ENCODE measurements at regions of chr21 and their contacts with region 1.

Region 1: DNA sequence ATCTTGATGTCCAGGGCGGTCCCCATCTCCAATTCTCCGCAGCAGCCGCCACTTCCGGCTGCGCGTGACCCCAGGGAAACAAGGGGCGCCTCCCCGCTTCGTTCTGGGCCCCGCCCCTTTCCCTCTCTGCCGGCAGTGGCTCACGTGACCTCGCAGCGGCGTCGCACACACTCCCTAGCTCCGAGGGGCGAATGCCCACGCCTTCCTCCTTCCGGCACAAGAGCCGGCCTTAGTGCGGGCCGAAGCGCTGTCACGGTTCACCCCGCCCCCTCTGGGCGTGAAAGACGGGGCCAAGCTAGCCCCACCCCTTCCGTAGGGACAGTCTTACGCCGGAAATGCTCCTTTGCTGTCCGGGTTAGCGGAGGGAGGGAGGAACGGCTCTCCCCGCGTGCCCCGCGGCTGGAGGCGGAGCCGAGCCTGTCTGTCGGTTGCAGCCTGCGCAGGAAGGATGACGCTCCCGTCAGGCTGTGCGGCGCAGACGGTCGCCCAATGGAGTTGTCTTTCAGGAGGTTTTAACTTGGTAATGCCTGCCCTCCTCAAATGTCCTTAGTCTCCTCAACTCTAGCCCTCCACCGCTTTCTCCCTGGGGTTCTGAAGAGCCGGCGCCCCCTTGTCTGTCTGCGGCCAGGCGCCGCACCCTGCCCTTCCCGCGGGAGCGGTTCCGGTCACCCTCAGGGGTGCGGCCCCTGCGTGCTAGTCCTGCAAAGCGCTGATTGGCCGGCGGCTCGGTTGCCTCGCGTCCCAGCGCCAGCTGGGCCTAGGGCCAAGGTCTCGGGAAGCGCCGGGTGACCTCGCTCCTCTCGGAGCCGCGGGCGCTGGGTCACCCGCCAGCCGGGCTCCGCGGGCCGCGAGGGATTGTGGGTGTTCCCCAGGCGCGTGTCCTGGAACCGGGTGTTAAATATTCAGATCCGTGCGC is at the start of gene VPS26C:
- DNase-seq: peak; percentile 94 to 99
- H3K4me3 ChIP-seq: peak within 1 kb of the TSS; percentile 81 to 93
- H3K27ac ChIP-seq: peak within 1 kb of the TSS; percentile 97 to 98
- H3K4me1 ChIP-seq: peaks cover 0 to 18% of the 10 kb centered on the region in 2 donors
- H3K27me3 ChIP-seq: no peaks in the 10 kb centered on the region
- CTCF ChIP-seq: no peak
- total RNA-seq, gene VPS26C: 137 TPM

Region 2: GRCh38 chr21:37072988-37073416 is 194.5 kb before region 1 on chr21 and contains the starts of genes PIGP and TTC3:
- intact Hi-C with region 1: loop called (anchors 5 kb)
- DNase-seq: peak; percentile 73 to 96
- H3K4me3 ChIP-seq: peak within 1 kb of the TSS; percentile 84 to 96
- H3K27ac ChIP-seq: peak within 1 kb of the TSS; percentile 95 to 100
- H3K4me1 ChIP-seq: peaks cover 0 to 15% of the 10 kb centered on the region in 2 donors
- H3K27me3 ChIP-seq: no peaks in the 10 kb centered on the region
- CTCF ChIP-seq: no peak
- total RNA-seq, gene PIGP: 0.64 TPM
- total RNA-seq, gene TTC3: 70.7 TPM

Region 3: DNA sequence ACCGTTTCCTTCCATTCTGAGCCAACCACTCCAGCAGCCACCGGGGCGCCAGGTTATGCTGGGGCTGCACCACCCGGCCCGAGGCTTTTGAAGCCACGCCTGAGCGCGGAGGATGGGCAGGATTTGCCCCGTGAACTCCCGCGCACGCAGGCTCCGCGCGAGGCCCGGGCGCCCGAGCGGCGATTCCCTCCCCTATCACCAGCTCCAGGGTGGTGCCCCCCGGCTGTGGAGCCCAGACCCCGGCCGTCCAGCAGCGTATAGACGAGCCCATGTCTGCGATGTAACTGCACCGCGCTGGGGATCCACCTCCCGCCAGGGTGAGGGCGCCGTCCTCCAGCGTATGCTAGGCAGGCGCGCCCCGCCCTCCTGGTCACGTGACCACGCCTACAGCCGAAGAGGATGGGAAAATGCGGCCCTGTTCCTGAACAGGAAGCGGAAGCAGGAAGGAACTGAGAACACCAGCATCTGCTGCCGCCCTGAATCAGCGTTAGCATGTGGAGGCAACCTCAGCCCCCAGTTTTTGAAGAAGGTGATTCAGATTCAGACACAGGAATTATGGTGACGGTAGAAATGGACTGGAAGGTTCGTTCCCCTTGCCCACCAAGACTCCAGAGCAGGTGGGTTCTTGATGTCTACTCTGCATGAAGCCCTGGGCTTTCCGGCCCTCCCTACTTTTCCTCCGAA is 46.4 kb before region 1 on chr21:
- intact Hi-C with region 1: loop called (anchors 1 kb)
- DNase-seq: peak; percentile 88 to 97
- H3K4me3 ChIP-seq: peak overlapping the region; percentile 54 to 68
- H3K27ac ChIP-seq: peak overlapping the region; percentile 55 to 72
- H3K4me1 ChIP-seq: peaks cover 0 to 6% of the 10 kb centered on the region in 2 donors
- H3K27me3 ChIP-seq: no peaks in the 10 kb centered on the region
- CTCF ChIP-seq: peak in 2 of 3 experiments; percentile 29 to 53

Region 4: GRCh38 chr21:37348664-37349063 is 81.1 kb after region 1 on chr21:
- intact Hi-C with region 1: no loop called
- DNase-seq: no peak
- H3K4me3 ChIP-seq: no peak overlapping the region
- H3K27ac ChIP-seq: no peak overlapping the region
- H3K4me1 ChIP-seq: no peaks in the 10 kb centered on the region
- H3K27me3 ChIP-seq: no peaks in the 10 kb centered on the region
- CTCF ChIP-seq: no peak

Region 5: DNA sequence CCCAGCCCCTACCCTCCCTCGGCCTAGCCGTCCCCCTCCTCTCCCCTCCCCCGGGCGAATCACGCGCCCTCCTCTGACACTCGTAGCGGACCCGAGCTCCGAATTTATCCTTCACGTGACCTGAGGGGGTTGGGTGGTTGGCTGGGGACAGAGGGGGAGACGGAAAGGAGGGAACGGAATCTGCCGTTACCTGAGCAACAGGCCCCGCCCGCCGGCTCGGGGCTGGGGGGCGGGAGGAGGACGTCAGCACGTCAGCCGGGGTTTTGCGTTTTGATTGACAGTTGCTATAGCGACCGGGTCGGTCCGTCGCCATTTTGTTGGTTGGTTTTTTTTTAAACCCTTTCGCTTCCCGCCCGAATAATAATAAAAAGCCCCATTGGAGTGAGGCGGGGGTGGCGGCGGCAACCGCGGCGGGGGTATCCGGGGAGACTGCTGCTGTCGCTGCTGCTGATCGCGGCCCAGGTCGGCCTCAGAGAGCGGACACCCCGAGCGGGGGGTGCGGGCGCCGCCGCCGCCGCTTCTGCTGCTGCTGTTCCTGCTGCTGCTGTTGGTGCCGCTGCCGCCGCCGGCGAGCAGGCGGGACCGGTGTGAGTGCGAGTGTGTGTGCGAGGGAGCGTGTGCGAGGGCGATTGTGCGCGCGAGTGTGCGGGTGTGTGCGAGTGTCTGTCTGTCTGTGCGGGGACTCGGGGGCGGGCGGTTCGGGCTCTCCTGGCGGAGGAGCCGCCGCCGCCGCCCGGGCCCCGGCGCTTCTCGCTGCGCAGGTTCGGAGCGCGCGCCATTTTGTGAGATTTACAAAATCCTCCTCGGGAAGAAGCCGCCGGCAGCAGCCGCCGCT is 99.2 kb after region 1 on chr21 and contains the start of gene DYRK1A:
- intact Hi-C with region 1: loop called (anchors 1 kb)
- DNase-seq: peak; percentile 97 to 99
- H3K4me3 ChIP-seq: peak within 1 kb of the TSS; percentile 89 to 97
- H3K27ac ChIP-seq: peak within 1 kb of the TSS; percentile 100
- H3K4me1 ChIP-seq: peaks cover 4 to 19% of the 10 kb centered on the region in 2 donors
- H3K27me3 ChIP-seq: no peaks in the 10 kb centered on the region
- CTCF ChIP-seq: peak in 1 of 3 experiments; percentile 5
- total RNA-seq, gene DYRK1A: 34.4 TPM

Region 6: DNA sequence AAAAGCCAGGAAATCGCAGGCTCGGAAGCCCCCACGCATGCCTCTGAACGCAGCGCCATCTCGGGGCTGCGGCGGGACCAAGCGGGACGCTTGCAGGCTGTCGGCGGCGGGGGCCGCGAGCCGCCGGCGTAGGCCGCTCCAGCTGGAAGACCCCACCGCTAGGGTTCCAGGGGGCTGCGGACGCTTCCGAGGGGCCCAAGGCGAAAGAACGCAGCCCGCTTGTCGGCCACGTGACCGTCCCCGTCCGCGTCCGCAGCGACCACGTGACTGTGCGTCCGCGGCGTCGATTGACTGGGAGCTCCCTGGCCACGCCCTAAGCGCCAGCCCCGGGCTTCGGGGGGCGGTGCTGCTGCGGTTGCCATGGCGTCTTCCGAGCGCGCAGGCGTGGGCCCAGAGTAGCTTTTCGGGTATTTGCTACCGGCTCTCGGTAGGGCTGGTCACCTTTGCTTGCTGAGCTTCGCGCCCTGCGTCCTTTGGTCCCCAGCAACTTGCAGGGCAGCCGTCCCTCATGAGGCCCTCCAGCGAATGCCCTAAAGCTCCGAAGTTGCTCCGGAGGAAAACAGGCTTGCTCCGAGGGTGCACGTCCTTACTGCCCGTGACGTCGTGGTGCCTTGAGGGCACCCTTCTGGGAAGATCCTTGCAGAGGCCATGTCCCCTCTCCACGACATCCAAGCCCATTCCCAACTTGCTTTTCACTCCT is 296.3 kb after region 1 on chr21:
- intact Hi-C with region 1: loop called (anchors 1 kb)
- DNase-seq: peak; percentile 67 to 94
- H3K4me3 ChIP-seq: peak overlapping the region; percentile 66 to 78
- H3K27ac ChIP-seq: peak overlapping the region; percentile 94 to 97
- H3K4me1 ChIP-seq: peaks cover 3 to 13% of the 10 kb centered on the region in 2 donors
- H3K27me3 ChIP-seq: no peaks in the 10 kb centered on the region
- CTCF ChIP-seq: peak; percentile 46 to 64 (median 57)

Measured in ascending aorta (tissue), 2 donors.